ENCODE measurements at regions of chr15 and their contacts with region 1.

Region 1: GRCh38 chr15:38660738-38661137 is 96.1 kb upstream of the RASGRP1 start:
- DNase-seq: peak; percentile 37
- H3K4me3 Mint-ChIP-seq: peak overlapping the region; percentile 26
- H3K27ac Mint-ChIP-seq: peak overlapping the region; percentile 61
- H3K4me1 Mint-ChIP-seq: peaks cover 62% of the 10 kb centered on the region
- H3K27me3 Mint-ChIP-seq: no peaks in the 10 kb centered on the region

Region 2: DNA sequence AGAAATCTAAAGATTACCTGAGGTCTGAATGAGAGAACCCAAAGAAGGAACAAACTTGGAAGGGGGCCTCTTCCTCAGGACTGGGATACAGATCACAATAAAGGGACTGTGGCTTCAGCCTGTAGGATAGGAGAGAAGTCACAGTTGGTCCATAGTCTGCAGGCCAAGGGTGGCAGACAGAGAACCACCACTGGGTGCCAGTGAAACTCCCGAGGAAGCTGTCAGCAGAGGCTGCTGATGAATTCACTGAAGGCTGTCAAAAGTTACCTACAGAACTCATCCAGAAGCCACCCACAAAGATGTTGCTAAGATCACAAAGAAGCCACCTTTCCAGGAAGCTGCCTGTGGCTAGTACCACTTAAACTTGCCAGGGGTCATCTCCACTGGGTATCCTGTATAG is 647.8 kb before region 1 on chr15:
- CTCF ChIA-PET with region 1: no interaction called
- POLR2A ChIA-PET with region 1: no interaction called
- DNase-seq: no peak
- H3K4me3 Mint-ChIP-seq: no peak overlapping the region
- H3K27ac Mint-ChIP-seq: no peak overlapping the region
- H3K4me1 Mint-ChIP-seq: no peaks in the 10 kb centered on the region
- H3K27me3 Mint-ChIP-seq: peaks cover 2% of the 10 kb centered on the region

Region 3: DNA sequence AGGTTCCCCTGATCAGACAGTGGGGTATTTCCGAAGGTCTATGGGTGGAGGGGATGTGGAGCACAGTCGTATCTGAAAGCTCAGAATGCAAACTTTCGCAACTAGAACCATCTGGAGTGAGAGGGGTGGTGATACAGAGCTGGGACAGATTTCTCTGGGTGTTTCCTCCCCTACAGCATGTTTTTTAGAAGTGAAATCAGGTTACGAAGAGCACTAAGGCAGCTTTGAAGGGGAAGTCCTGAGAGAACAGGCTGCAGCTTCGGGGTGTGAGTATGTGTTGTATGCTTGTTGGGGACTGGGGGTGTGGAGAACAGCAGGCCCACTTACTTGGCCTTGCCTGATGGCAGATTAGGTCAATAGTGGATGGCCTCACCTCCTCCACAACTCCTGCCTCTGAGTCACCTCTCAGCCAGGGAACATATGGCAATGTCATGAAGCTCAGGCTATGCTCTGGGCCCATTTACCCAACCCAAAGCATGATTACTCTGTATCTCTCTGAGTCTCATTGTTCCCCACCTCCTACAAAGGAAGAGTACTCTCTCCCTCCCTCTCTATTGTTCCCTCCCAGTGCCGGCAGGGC is 11.0 kb after region 1 on chr15:
- CTCF ChIA-PET with region 1: interaction called, 18 read pairs
- POLR2A ChIA-PET with region 1: interaction called, 497 read pairs
- DNase-seq: peak; percentile 52
- H3K4me3 Mint-ChIP-seq: peak overlapping the region; percentile 56
- H3K27ac Mint-ChIP-seq: peak overlapping the region; percentile 97
- H3K4me1 Mint-ChIP-seq: peaks cover 81% of the 10 kb centered on the region
- H3K27me3 Mint-ChIP-seq: no peaks in the 10 kb centered on the region

Measured in activated CD4-positive, alpha-beta memory T cell treated with anti-CD3 and anti-CD28 coated beads, Interleukin-2, amount 10 ng/mL, durations not matched to agents 7 days and 5 days (primary cell).